Caco-2 (cell line): ENCODE measurements at regions of chr10 and their contacts with region 1.

Region 1: DNA sequence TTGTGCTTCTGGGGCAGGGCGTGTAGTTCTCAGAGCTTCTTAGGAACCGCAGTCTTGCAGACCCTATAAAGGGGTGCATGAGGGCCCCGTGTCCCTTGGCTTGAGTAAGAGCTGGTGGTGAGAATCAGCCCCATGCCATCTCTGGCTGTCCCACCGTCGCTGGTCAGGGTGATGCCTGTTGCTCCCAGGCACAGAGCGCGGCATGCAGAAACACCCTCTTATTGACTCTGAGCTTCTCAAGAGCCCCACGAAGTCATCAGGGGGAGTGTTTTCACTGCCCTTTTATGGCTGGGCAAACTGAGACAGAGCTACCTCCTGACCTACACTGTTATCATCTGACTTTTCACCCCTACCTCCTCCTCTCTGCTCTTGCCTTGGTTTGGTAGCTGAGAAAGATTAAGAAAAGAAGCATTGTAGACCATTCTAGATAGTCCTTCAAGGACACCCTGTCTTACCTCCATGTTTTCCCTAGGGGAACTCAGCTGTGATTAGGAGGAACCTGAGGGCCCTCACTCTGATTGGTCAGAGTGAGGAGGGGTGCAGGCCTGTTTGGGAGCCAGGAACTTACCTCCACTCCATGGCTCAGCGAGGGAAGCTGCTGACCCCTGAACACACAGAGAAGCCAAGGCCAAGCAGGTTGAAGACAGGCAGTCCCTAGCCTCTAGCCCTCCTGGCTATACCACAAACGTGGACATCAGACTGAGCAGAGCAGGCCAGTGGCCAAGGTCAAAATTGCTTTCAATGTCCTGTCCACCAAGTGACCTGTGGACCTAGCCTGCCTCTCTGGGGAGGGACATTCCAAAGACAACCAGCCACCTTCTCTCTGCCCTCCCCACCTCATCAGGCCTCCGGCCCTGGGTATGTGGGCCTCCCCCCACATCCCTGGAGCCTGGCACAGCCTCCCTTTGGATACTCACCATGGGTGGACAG is 17.6 kb downstream of the UNC5B start:
- DNase-seq: peak; percentile 51 to 79
- H3K4me3 ChIP-seq: no peak overlapping the region
- H3K4me3 Mint-ChIP-seq: no peak overlapping the region
- H3K27ac Mint-ChIP-seq: peak overlapping the region; percentile 12
- H3K4me1 ChIP-seq: peaks cover 49% of the 10 kb centered on the region
- H3K4me1 Mint-ChIP-seq: peaks cover 39% of the 10 kb centered on the region
- H3K27me3 ChIP-seq: no peaks in the 10 kb centered on the region
- H3K27me3 Mint-ChIP-seq: no peaks in the 10 kb centered on the region
- CTCF ChIP-seq: no peak

Region 2: GRCh38 chr10:71244431-71245419 is 14.7 kb after region 1 on chr10:
- CTCF ChIA-PET with region 1: interaction called, 3 read pairs
- POLR2A ChIA-PET with region 1: interaction called, 3 read pairs
- intact Hi-C with region 1: loop called (anchors 2 kb)
- DNase-seq: no peak
- H3K4me3 ChIP-seq: no peak overlapping the region
- H3K4me3 Mint-ChIP-seq: no peak overlapping the region
- H3K27ac Mint-ChIP-seq: peak overlapping the region; percentile 90
- H3K4me1 ChIP-seq: peaks cover 61% of the 10 kb centered on the region
- H3K4me1 Mint-ChIP-seq: peaks cover 40% of the 10 kb centered on the region
- H3K27me3 ChIP-seq: no peaks in the 10 kb centered on the region
- H3K27me3 Mint-ChIP-seq: no peaks in the 10 kb centered on the region
- CTCF ChIP-seq: no peak